Naive thymus-derived CD4-positive, alpha-beta T cell (primary cell): ENCODE measurements at regions of chr19 and their contacts with region 1.

Region 1: DNA sequence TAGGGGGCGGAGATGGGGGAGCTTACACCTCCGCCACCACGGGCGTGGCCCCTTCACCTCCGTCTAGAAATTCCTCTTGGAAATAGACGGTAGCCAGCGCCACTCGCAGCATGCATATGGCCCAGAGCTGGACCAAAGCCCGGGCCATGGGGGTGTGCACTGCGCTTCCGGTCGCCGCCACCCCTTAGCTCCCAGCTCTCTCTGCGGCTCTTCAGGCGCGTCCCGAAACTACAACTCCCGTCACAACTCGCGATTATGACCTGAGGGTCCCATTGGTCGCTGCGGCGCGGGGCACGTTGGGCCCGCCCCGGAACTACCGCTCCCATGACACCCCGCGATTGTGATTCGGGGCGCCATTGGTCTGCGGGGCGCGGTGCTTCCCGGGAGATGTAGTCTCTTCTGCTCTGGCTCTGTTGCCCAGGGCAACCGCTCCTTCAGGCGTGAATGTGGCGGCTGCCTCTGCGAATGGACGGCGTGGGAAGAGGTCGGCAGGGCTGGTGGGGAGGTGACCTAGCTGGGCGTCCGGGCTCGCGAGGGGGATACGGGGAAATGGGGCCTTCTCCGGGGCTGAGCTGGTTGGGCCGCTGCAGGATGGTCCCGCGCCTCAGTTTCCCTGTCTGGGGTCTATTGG is at the starts of genes C19orf44 and CALR3:
- DNase-seq: peak; percentile 84 to 97 (median 96)
- ATAC-seq: peak; percentile 99
- H3K4me3 ChIP-seq: peak within 1 kb of the TSS; percentile 90
- H3K4me3 Mint-ChIP-seq: peak within 1 kb of the TSS; percentile 86 to 98 (median 94)
- H3K27ac ChIP-seq: peak within 1 kb of the TSS; percentile 72
- H3K27ac Mint-ChIP-seq: peak within 1 kb of the TSS; percentile 74 to 98 (median 87)
- H3K4me1 ChIP-seq: peaks cover 0 to 4% of the 10 kb centered on the region in 2 donors
- H3K4me1 Mint-ChIP-seq: peaks cover 10 to 23% (median 19%) of the 10 kb centered on the region in 7 donors
- H3K27me3 ChIP-seq: no peaks in the 10 kb centered on the region
- H3K27me3 Mint-ChIP-seq: no peaks in the 10 kb centered on the region
- total RNA-seq, gene C19orf44: 1.5 to 6.0 (median 3.4) TPM
- total RNA-seq, gene CALR3: not detected

Region 2: DNA sequence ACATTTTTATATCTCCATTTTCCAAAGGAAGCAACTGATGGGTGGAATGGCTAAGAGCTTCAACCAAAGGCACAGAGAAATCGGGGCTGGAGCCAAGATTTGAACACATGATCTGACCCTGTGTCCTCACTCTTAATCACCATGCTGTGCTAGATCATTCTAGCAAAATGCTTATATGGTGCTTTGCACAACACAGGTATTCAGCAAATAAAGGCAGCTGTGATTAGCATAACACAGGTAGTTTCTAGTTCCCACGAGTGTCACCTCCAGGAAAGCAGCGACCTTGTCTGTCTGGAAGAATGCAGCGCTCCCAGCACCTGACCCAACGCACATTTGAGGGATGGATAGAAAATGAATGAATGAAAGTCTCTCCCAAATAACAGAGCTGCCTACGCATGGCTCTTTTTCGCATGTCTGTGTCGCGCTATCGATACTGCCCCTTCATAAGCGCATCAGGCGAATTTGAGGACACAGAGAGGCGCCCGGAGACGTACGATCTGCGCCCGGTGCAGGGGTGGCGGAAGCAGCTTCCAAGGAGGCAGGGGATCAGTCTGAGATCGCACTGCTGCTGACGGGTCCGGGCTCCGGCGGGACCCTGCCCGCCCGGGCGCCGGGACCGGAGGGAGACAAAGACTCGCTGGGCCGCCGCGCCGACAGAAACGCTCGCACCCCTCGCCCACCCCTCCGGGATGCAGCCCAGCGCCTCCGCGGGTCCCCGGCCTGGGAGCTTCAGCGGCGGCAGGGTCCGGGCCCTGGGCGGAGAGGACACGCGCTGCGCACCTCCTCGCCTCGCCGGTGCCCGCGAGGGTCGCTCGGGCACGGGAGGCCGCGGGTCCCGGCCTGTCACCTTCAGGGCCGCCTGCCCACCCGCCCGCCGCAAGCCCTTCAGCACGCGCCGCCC is 24.9 kb before region 1 on chr19:
- CTCF ChIA-PET with region 1: no interaction called
- POLR2A ChIA-PET with region 1: interaction called, 4 read pairs
- intact Hi-C with region 1: loop called (anchors 1 kb)
- DNase-seq: peak in 5 of 9 donors; percentile 14 to 40 (median 18)
- ATAC-seq: peak; percentile 2
- H3K4me3 ChIP-seq: peak overlapping the region; percentile 96
- H3K4me3 Mint-ChIP-seq: peak overlapping the region; percentile 84 to 93 (median 88)
- H3K27ac ChIP-seq: peak overlapping the region; percentile 96
- H3K27ac Mint-ChIP-seq: peak overlapping the region; percentile 18 to 87 (median 79)
- H3K4me1 ChIP-seq: peaks cover 5 to 15% of the 10 kb centered on the region in 2 donors
- H3K4me1 Mint-ChIP-seq: peaks cover 30 to 47% (median 41%) of the 10 kb centered on the region in 7 donors
- H3K27me3 ChIP-seq: no peaks in the 10 kb centered on the region
- H3K27me3 Mint-ChIP-seq: peaks cover 0 to 2% (median 0%) of the 10 kb centered on the region in 5 donors

Region 3: DNA sequence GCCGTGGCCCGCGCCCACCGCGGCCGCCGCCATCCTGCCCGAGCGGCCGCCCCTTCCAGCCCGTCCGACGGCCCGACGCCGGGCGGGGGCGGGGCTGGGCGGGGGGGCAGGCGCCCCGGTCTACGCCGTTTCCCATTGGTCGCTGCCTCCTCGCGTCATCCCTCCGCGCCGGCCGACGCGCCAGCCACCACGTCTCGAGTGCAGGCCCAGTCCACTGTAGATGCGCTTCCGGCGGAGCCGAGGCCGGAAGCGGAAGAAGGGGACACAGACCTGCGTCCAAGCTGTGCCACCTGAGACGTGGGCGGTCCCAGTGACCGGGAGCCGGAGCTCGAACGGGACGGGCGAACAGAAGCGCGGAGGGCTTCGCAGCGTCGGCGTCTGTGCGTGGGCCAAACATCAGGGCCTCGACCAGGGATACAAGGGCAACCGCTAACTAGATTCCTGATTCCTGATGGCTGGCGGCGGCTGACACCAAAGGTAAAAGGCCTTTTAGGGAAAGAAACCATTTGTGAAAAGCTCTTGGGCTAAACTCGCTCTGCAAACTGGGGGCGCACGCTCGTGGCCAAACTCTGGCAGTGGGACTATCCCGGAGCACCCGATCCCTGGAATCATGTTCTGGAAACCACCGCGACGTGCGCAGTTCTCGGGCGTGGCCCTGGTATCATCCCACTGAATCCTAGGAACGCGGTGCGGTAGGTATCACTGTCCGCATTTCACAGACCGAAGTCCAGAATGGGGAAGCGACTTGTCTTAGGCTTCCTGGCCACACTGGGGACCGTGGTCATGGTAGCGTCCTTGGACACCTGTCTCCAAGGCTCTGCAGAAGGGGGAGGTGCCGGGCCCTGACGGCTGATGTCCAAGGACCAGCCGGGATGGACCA is 76.5 kb after region 1 on chr19 and contains the start of gene SLC35E1:
- CTCF ChIA-PET with region 1: no interaction called
- POLR2A ChIA-PET with region 1: interaction called, 3 read pairs
- intact Hi-C with region 1: loop called in 1 of 2 experiments (anchors 1 kb)
- DNase-seq: peak; percentile 80 to 92 (median 89)
- ATAC-seq: peak; percentile 98
- H3K4me3 ChIP-seq: peak within 1 kb of the TSS; percentile 97
- H3K4me3 Mint-ChIP-seq: peak within 1 kb of the TSS; percentile 97 to 100 (median 99)
- H3K27ac ChIP-seq: peak within 1 kb of the TSS; percentile 95
- H3K27ac Mint-ChIP-seq: peak within 1 kb of the TSS; percentile 94 to 100 (median 99)
- H3K4me1 ChIP-seq: peaks cover 28 to 30% of the 10 kb centered on the region in 2 donors
- H3K4me1 Mint-ChIP-seq: peaks cover 35 to 74% (median 47%) of the 10 kb centered on the region in 7 donors
- H3K27me3 ChIP-seq: no peaks in the 10 kb centered on the region
- H3K27me3 Mint-ChIP-seq: peaks cover 0 to 2% (median 0%) of the 10 kb centered on the region in 5 donors
- total RNA-seq, gene SLC35E1: 33.0 to 67.3 (median 58.7) TPM

Region 4: GRCh38 chr19:16957151-16957701 is 461.1 kb after region 1 on chr19:
- CTCF ChIA-PET with region 1: no interaction called
- POLR2A ChIA-PET with region 1: no interaction called
- intact Hi-C with region 1: no loop called
- DNase-seq: no peak
- ATAC-seq: no peak
- H3K4me3 ChIP-seq: no peak overlapping the region
- H3K4me3 Mint-ChIP-seq: no peak overlapping the region
- H3K27ac ChIP-seq: no peak overlapping the region
- H3K27ac Mint-ChIP-seq: peak overlapping the region in 1 of 9 donors; percentile 50
- H3K4me1 ChIP-seq: no peaks in the 10 kb centered on the region
- H3K4me1 Mint-ChIP-seq: peaks cover 0 to 6% (median 0%) of the 10 kb centered on the region in 7 donors
- H3K27me3 ChIP-seq: no peaks in the 10 kb centered on the region
- H3K27me3 Mint-ChIP-seq: peaks cover 8 to 19% (median 13%) of the 10 kb centered on the region in 5 donors

Region 5: GRCh38 chr19:17001603-17002183 is 505.6 kb after region 1 on chr19:
- CTCF ChIA-PET with region 1: no interaction called
- POLR2A ChIA-PET with region 1: no interaction called
- intact Hi-C with region 1: loop called in 1 of 2 experiments (anchors 5 kb)
- DNase-seq: peak; percentile 53 to 96 (median 91)
- ATAC-seq: peak; percentile 99
- H3K4me3 ChIP-seq: peak overlapping the region; percentile 43
- H3K4me3 Mint-ChIP-seq: peak overlapping the region; percentile 66 to 81 (median 76)
- H3K27ac ChIP-seq: peak overlapping the region; percentile 64
- H3K27ac Mint-ChIP-seq: peak overlapping the region; percentile 73 to 95 (median 92)
- H3K4me1 ChIP-seq: peaks cover 21% of the 10 kb centered on the region in 2 donors
- H3K4me1 Mint-ChIP-seq: peaks cover 8 to 35% (median 22%) of the 10 kb centered on the region in 7 donors
- H3K27me3 ChIP-seq: no peaks in the 10 kb centered on the region
- H3K27me3 Mint-ChIP-seq: peaks cover 0 to 3% (median 0%) of the 10 kb centered on the region in 5 donors